GM12878 (cell line): ENCODE measurements at regions of chr14 and their contacts with region 1.

Region 1: DNA sequence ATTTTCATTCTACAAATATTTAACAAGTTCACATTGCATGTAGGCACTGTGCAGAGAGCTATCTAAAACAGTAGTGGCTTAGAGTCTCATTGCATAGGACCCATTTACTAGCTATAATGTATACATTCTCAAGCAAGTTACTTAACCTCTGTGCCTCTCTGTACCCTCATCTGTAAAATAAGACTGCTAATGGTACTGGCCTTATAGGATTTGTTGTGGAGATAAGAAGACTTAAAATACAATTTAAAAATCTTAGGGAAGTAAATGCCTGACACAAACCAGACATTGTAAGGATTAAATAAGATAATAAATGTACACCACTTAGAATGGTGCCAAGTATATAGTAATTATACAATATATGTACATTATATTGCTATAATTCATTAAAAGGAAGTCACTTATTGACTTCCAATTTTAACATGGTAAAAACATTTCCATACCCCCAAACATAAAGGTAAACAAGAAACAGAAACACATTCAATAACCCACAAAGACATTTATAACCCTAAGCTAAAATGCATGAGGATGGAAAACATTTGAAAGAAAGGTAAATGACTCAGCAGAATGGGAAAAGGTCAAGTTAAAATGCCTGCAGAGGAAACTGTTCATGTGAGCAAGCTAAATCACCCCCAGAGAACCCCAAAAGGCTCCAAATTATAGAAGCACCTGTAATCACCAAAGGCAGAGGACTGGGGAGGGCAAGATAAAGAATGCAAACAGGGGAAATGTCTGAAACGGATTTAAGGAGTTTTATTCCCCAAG is 30.8 kb downstream of the RPS6KA5 start:
- DNase-seq: no peak
- ATAC-seq: peak; percentile 40; the same call in 2 of the 3 replicates
- H3K4me3 ChIP-seq: no peak overlapping the region
- H3K27ac ChIP-seq: no peak overlapping the region
- H3K4me1 ChIP-seq: peaks cover 4% of the 10 kb centered on the region
- H3K27me3 ChIP-seq: no peaks in the 10 kb centered on the region
- CTCF ChIP-seq: no peak
- EP300 ChIP-seq: no peak
- POLR2A ChIP-seq: no peak
- RAD21 ChIP-seq: no peak

Region 2: GRCh38 chr14:91009501-91010152 is 20.0 kb before region 1 on chr14:
- CTCF ChIA-PET with region 1: interaction called, 4 read pairs
- POLR2A ChIA-PET with region 1: interaction called, 5 read pairs
- RAD21 ChIA-PET with region 1: no interaction called
- SMC1A ChIA-PET with region 1: interaction called, 14 read pairs
- in situ Hi-C with region 1: no loop called
- intact Hi-C with region 1: no loop called
- DNase-seq: peak; percentile 85
- ATAC-seq: peak; percentile 92
- H3K4me3 ChIP-seq: peak overlapping the region; percentile 37
- H3K27ac ChIP-seq: peak overlapping the region; percentile 78
- H3K4me1 ChIP-seq: peaks cover 30% of the 10 kb centered on the region
- H3K27me3 ChIP-seq: no peaks in the 10 kb centered on the region
- CTCF ChIP-seq: no peak
- EP300 ChIP-seq: peak; percentile 23 to 32; a peak in 1 of 4 replicates
- POLR2A ChIP-seq: no peak
- RAD21 ChIP-seq: peak; percentile 2; the same call in 1 of the 2 replicates

Region 3: GRCh38 chr14:91094772-91095171 is 65.1 kb after region 1 on chr14:
- CTCF ChIA-PET with region 1: no interaction called
- POLR2A ChIA-PET with region 1: no interaction called
- RAD21 ChIA-PET with region 1: no interaction called
- SMC1A ChIA-PET with region 1: no interaction called
- in situ Hi-C with region 1: no loop called
- intact Hi-C with region 1: no loop called
- DNase-seq: no peak
- ATAC-seq: no peak
- H3K4me3 ChIP-seq: no peak overlapping the region
- H3K27ac ChIP-seq: no peak overlapping the region
- H3K4me1 ChIP-seq: peaks cover 3% of the 10 kb centered on the region; the same call in 1 of the 2 replicates
- H3K27me3 ChIP-seq: no peaks in the 10 kb centered on the region
- CTCF ChIP-seq: no peak
- EP300 ChIP-seq: no peak
- POLR2A ChIP-seq: no peak
- RAD21 ChIP-seq: no peak